ENCODE measurements at regions of chr1 and their contacts with region 1.

Region 1: DNA sequence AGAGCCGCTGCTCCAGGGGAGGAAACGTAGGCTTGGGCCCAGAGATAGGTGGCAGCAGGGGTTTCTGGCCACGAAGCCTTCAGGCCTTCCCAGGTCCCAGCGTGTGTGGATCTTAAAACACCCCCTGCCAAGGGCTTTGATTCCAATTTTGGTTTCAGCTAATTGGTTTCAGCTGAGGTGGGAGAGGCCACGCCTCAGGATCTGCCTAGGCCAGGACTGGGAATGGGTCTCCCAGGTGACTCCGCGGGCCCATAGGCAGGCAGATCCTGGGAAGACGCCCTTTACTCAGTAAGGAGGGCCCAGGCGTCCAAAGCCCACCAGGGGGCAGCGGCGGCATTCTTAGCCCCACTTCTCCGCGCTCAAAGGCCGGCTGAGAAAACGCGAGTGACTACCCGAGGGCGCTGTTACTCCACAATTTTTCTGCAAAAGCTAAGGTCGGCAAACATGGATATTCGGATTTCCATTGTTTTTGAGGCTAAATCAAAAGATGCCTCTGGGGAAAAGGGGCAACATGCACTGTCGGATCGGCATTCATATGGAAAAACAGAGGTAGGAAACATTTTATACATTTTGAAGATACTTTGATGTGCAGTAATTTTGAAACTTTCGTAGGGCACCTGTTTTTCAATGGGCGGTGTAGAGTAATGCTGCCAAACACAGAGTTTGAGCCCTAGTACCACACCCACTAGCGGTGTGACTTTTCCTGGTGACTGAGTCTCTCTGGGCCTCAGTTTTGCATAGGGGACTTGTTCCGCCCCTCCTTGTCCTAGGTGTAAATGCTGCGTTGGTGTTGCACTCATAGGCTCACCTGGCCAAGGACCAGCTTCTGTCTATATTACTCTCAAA is 31.8 kb upstream of the BCL10 start:
- DNase-seq: no peak
- ATAC-seq: peak; percentile 98
- H3K4me3 ChIP-seq: no peak overlapping the region
- H3K27ac ChIP-seq: no peak overlapping the region
- H3K4me1 ChIP-seq: peaks cover 5% of the 10 kb centered on the region
- H3K27me3 ChIP-seq: peaks cover 0 to 4% of the 10 kb centered on the region in 2 experiments; a peak in 2 of 4 replicates
- CTCF ChIP-seq: peak; percentile 88 to 91 (median 90)
- EP300 ChIP-seq: no peak
- POLR2A ChIP-seq: no peak
- RAD21 ChIP-seq: peak; percentile 86

Region 2: DNA sequence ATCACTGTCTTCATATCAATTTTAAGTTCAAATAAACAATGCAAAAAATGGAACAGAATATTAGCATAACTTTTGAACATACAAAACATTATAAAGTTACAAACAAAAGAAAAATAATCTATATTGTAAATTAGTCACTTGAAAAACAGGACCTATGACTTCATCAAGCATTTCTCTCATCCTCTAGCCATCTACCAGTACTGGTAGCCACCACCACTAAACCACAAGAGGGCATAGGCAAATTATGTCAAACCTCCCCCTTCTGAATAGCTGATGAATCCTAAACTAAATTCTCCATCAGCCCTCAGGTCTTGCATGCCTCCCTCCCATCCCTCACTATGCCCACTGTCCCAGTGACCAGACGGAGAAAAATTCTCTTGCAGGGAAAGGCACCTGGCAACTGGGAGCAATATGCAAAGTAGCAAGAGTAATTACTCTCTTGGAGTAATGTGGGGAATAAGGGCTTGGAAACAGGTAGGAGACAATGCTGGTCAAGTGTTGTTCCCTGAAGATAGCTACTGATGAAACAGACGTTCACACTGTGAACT is 655.0 kb before region 1 on chr1:
- CTCF ChIA-PET with region 1: no interaction called
- POLR2A ChIA-PET with region 1: no interaction called
- RAD21 ChIA-PET with region 1: no interaction called
- SMC1A ChIA-PET with region 1: no interaction called
- in situ Hi-C with region 1: no loop called
- intact Hi-C with region 1: no loop called
- DNase-seq: no peak
- ATAC-seq: 0 out of 3 replicates have a peak, but pooled peaks have one; percentile 39
- H3K4me3 ChIP-seq: no peak overlapping the region
- H3K27ac ChIP-seq: no peak overlapping the region
- H3K4me1 ChIP-seq: no peaks in the 10 kb centered on the region
- H3K27me3 ChIP-seq: no peaks in the 10 kb centered on the region
- CTCF ChIP-seq: no peak
- EP300 ChIP-seq: no peak
- POLR2A ChIP-seq: no peak
- RAD21 ChIP-seq: no peak

Region 3: DNA sequence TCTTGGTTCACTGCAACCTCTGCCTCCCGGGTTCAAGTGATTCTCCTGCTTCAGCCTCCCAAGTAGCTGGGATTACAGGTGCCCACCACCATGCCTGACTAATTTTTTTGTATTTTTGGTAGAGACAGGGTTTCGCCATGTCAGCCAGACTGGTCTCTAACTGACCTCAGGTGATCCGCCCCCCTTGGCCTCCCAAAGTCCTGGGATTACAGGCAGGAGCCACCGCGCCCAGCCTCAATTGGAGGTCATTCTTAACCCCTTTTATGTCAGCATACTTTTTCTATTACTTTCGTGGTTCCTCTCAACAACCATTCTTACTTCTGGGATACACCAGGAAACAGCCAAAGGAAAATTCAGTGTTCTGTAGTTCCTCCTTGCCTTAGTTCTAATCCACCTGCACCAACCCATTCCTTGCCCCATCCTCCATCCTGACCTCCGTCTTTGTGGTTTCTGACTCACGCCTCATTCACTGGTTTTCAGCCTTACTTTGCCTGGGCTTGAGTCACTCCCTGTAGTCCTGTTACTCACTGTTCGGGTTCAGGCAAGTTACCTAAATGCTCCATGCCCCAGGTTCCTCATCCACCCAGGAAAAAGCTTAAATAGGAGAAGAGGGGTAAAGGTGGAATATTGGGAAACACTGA is 18.9 kb before region 1 on chr1:
- CTCF ChIA-PET with region 1: no interaction called
- POLR2A ChIA-PET with region 1: no interaction called
- RAD21 ChIA-PET with region 1: no interaction called
- SMC1A ChIA-PET with region 1: no interaction called
- in situ Hi-C with region 1: no loop called
- intact Hi-C with region 1: no loop called
- DNase-seq: no peak
- ATAC-seq: no peak
- H3K4me3 ChIP-seq: no peak overlapping the region
- H3K27ac ChIP-seq: no peak overlapping the region
- H3K4me1 ChIP-seq: peaks cover 11% of the 10 kb centered on the region
- H3K27me3 ChIP-seq: no peaks in the 10 kb centered on the region
- CTCF ChIP-seq: no peak
- EP300 ChIP-seq: no peak
- POLR2A ChIP-seq: no peak
- RAD21 ChIP-seq: no peak

Region 4: DNA sequence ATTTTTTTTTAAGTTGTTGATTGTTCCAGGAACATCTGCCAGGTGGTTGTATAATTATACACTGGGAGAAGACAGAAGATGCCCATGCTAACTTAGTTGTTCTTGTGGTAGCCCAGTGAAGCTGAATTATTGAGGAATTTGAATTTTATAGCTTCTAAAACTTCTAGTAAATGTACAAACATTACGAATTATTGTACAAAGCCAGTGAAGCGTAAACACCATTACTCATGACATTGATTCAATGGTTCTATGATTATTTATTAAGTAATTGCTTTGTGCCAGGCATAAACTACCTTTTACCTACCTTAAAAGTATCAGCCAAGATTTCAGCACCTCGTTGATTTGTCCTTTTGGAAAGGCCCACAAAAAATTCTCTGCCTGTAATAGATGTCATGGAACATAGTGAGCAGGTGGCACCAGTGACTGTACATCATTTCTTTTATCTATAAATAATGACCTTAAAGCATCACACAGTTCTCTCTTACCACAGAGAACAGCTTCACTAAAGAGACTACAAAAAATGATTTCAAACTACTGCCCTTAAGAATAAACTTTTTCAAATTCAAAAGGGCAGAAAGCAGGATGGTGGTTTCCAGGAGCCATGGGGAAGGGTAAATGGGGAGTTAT is 43.1 kb after region 1 on chr1:
- CTCF ChIA-PET with region 1: no interaction called
- POLR2A ChIA-PET with region 1: no interaction called
- RAD21 ChIA-PET with region 1: no interaction called
- SMC1A ChIA-PET with region 1: no interaction called
- in situ Hi-C with region 1: no loop called
- intact Hi-C with region 1: no loop called
- DNase-seq: no peak
- ATAC-seq: no peak
- H3K4me3 ChIP-seq: no peak overlapping the region
- H3K27ac ChIP-seq: no peak overlapping the region
- H3K4me1 ChIP-seq: no peaks in the 10 kb centered on the region
- H3K27me3 ChIP-seq: no peaks in the 10 kb centered on the region
- CTCF ChIP-seq: no peak
- EP300 ChIP-seq: no peak
- POLR2A ChIP-seq: no peak
- RAD21 ChIP-seq: no peak

Region 5: DNA sequence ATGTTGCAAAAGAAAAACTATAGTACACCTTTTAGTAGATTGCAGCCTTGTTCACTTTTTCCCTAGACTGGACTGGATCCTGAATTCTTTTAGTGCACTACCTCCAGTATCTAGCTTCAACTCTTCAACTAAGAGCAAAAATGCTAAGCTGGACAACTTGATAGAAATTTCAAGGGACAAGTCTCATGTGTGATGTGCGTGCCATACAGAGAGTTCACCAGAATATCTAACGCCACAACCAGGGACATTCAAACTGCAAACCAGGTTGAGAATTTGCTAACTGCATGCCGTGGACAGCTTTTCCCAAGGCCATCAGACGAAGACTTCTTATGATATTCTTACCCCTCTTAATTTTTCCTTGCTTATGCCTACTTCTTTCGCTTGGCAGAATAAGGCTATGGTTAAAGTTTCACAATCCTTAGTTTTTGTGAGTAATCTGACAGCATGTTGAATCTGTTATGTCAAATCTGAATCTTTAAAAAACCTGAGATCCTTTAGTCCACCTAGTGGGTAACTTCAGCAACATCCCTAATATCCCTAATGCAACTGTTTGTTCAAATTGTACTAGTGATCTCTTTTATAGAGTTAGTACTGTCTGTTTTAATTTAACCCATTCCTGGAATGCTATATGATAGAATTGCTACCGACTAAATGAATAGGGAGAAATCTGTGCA is 90.3 kb after region 1 on chr1:
- CTCF ChIA-PET with region 1: no interaction called
- POLR2A ChIA-PET with region 1: no interaction called
- RAD21 ChIA-PET with region 1: no interaction called
- SMC1A ChIA-PET with region 1: no interaction called
- in situ Hi-C with region 1: no loop called
- intact Hi-C with region 1: loop called (anchors 2 kb)
- DNase-seq: no peak
- ATAC-seq: no peak
- H3K4me3 ChIP-seq: no peak overlapping the region
- H3K27ac ChIP-seq: no peak overlapping the region
- H3K4me1 ChIP-seq: no peaks in the 10 kb centered on the region
- H3K27me3 ChIP-seq: no peaks in the 10 kb centered on the region
- CTCF ChIP-seq: no peak
- EP300 ChIP-seq: no peak
- POLR2A ChIP-seq: no peak
- RAD21 ChIP-seq: peak; percentile 31; the same call in 1 of the 2 replicates

Region 6: DNA sequence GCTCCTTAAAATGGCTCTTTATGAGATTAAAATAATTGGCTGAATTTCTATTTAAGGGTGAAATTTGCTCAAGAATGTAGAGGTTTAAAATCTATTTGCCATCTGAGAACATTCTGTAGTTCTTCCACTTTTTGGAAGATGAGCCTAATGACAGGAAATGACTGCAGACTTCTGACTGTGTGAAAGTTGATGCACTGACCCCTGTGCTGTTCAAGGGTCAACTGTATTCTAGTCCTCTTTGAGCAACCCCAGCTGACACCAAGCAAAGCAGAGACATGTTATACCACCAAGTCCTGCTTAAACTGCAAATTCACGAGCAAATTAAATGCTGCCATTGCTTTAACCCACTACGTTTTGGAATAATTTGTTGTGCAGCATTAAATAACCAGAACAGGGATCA is 130.1 kb after region 1 on chr1:
- CTCF ChIA-PET with region 1: no interaction called
- POLR2A ChIA-PET with region 1: no interaction called
- RAD21 ChIA-PET with region 1: no interaction called
- SMC1A ChIA-PET with region 1: no interaction called
- in situ Hi-C with region 1: no loop called
- intact Hi-C with region 1: no loop called
- DNase-seq: no peak
- ATAC-seq: no peak
- H3K4me3 ChIP-seq: no peak overlapping the region
- H3K27ac ChIP-seq: no peak overlapping the region
- H3K4me1 ChIP-seq: no peaks in the 10 kb centered on the region
- H3K27me3 ChIP-seq: no peaks in the 10 kb centered on the region
- CTCF ChIP-seq: no peak
- EP300 ChIP-seq: no peak
- POLR2A ChIP-seq: no peak
- RAD21 ChIP-seq: no peak

Region 7: GRCh38 chr1:85576642-85577418 is 268.6 kb after region 1 on chr1:
- CTCF ChIA-PET with region 1: no interaction called
- POLR2A ChIA-PET with region 1: no interaction called
- RAD21 ChIA-PET with region 1: no interaction called
- SMC1A ChIA-PET with region 1: no interaction called
- in situ Hi-C with region 1: no loop called
- intact Hi-C with region 1: loop called (anchors 5 kb)
- DNase-seq: no peak
- ATAC-seq: peak; percentile 89
- H3K4me3 ChIP-seq: peak overlapping the region; percentile 75
- H3K27ac ChIP-seq: no peak overlapping the region
- H3K4me1 ChIP-seq: peaks cover 5% of the 10 kb centered on the region
- H3K27me3 ChIP-seq: peaks cover 12 to 21% of the 10 kb centered on the region in 2 experiments
- CTCF ChIP-seq: peak; percentile 43 to 54 (median 50); a peak in 5 of 6 replicates
- EP300 ChIP-seq: no peak
- POLR2A ChIP-seq: peak; percentile 60
- RAD21 ChIP-seq: peak; percentile 24; the same call in 1 of the 2 replicates

Region 8: DNA sequence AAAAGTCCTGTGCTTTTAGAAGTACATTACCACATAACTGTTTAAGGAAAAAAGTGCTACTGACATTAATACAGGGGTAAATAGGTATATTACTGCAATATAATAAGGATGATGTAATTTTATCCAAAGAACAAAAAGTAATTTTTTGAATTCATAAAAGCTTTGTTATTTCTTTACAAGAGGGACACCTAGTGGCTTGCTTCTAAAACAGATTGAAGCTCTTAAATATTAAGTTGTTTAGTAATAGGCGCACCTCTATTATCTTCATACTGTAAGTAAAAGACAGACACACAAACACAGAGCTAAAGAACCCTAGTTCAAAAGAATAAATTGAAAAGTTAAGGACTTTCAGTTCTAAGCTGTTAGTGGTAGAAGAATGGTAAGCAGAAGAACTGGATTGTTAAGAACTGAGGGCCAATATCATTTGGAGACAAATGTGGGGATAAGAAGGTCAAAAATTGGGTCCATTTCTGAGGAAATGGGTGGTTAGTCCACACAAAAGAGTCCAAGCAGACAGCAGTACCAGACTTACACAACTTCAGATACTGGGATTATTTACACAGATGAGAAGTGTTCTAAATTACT is 384.6 kb after region 1 on chr1:
- CTCF ChIA-PET with region 1: interaction called, 11 read pairs
- POLR2A ChIA-PET with region 1: no interaction called
- RAD21 ChIA-PET with region 1: no interaction called
- SMC1A ChIA-PET with region 1: interaction called, 3 read pairs
- in situ Hi-C with region 1: loop called (anchors 10 kb)
- intact Hi-C with region 1: loop called (anchors 10 kb)
- DNase-seq: no peak
- ATAC-seq: no peak
- H3K4me3 ChIP-seq: no peak overlapping the region
- H3K27ac ChIP-seq: no peak overlapping the region
- H3K4me1 ChIP-seq: no peaks in the 10 kb centered on the region
- H3K27me3 ChIP-seq: no peaks in the 10 kb centered on the region
- CTCF ChIP-seq: peak in 1 of 3 experiments; percentile 10; a peak in 1 of 6 replicates
- EP300 ChIP-seq: no peak
- POLR2A ChIP-seq: no peak
- RAD21 ChIP-seq: no peak

Measured in GM12878 (cell line).